Activated CD8-positive, alpha-beta T cell treated with anti-CD3 and anti-CD28 coated beads for 36 hours (primary cell): ENCODE measurements at regions of chr7 and their contacts with region 1.

Region 1: DNA sequence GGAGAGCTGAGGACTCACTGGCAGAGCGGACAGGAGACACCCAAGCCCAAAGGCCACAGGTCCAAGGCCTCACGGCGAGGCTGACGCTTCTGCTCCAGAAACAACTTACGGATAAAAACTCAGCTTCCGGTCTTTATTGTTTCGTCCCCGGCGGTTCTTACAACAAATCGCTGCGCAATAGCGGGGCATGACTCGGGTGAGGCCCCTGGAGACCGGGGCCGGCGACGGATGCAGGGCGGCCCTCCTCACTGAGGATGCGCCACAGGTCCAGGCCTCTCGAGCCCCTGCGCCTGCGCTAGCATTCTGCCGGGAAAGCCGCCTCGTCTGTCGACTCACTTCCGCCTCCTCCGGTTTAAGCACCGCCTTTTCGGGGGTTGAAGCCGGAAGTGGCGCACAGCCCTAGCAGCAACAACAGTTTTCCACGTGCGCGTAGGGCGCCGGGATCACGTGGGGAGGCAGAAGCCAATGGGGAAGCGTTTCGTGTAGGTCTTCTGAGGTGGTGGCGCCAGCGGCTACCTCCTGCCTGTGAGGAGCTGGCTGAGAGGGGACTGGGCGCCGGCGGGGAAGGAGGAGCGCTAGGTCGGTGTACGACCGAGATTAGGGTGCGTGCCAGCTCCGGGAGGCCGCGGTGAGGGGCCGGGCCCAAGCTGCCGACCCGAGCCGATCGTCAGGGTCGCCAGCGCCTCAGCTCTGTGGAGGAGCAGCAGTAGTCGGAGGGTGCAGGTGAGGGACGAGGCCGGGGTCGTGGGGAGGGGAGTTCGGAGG is at the starts of genes DNAJB9 and THAP5:
- DNase-seq: peak; percentile 99
- ATAC-seq: peak; percentile 92
- H3K4me3 Mint-ChIP-seq: peak within 1 kb of the TSS; percentile 99
- H3K27ac Mint-ChIP-seq: peak within 1 kb of the TSS; percentile 99
- H3K4me1 Mint-ChIP-seq: peaks cover 45% of the 10 kb centered on the region
- H3K27me3 Mint-ChIP-seq: no peaks in the 10 kb centered on the region
- CTCF ChIP-seq: no peak
- total RNA-seq, gene DNAJB9: 6.5 to 11.6 TPM
- total RNA-seq, gene THAP5: 26.5 to 28.8 TPM

Region 2: GRCh38 chr7:108079648-108080591 is 489.6 kb before region 1 on chr7:
- CTCF ChIA-PET with region 1: no interaction called
- POLR2A ChIA-PET with region 1: no interaction called
- intact Hi-C with region 1: no loop called
- DNase-seq: no peak
- ATAC-seq: no peak
- H3K4me3 Mint-ChIP-seq: no peak overlapping the region
- H3K27ac Mint-ChIP-seq: no peak overlapping the region
- H3K4me1 Mint-ChIP-seq: no peaks in the 10 kb centered on the region
- H3K27me3 Mint-ChIP-seq: peaks cover under 1% of the 10 kb centered on the region
- CTCF ChIP-seq: no peak

Region 3: DNA sequence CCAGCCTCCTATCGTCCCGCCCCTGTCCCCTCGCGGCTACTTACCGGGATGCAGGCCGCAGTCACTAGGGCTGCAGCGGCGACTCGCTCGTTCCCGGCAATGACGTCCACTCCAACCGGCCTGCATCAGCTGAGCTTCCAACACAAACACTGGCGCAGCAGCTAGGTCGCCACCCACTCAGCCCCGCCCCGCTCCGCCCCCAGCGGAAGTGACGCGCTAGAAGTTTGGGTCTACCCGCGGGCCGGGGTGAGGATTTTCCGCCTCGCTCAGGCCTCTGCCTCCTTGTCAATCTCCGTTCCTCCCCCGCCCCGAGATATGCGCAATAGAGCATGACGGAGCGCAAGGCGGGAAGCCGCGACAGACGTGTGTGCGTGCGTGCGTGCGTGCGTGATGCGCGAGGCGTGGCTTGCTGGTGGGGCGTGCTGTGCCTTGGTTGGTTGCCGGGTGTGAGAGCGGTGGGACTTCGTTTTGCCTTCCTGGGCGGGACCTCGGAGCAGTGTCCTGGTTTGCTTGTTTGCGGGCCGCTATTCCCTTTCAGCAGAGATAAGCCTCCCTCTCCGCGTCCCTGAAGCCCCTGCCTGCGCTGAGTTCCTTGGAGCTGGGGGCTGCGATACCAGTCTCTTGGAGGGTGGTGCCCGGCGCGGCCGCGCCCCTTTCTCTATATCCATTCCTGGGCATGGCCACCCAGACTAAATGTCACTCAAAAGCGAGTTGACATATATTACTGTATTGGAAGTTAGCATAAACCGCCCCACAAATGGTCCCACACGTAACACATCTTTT is 43.4 kb before region 1 on chr7 and contains the start of gene PNPLA8:
- CTCF ChIA-PET with region 1: interaction called, 4 read pairs
- POLR2A ChIA-PET with region 1: interaction called, 17 read pairs
- intact Hi-C with region 1: loop called (anchors 1 kb)
- DNase-seq: peak; percentile 100
- ATAC-seq: peak; percentile 93
- H3K4me3 Mint-ChIP-seq: peak within 1 kb of the TSS; percentile 85
- H3K27ac Mint-ChIP-seq: peak within 1 kb of the TSS; percentile 98
- H3K4me1 Mint-ChIP-seq: peaks cover 44% of the 10 kb centered on the region
- H3K27me3 Mint-ChIP-seq: no peaks in the 10 kb centered on the region
- CTCF ChIP-seq: no peak
- total RNA-seq, gene PNPLA8: 19.2 to 21.4 TPM

Region 4: GRCh38 chr7:109126404-109127050 is 557.0 kb after region 1 on chr7:
- CTCF ChIA-PET with region 1: no interaction called
- POLR2A ChIA-PET with region 1: no interaction called
- intact Hi-C with region 1: no loop called
- DNase-seq: no peak
- ATAC-seq: no peak
- H3K4me3 Mint-ChIP-seq: no peak overlapping the region
- H3K27ac Mint-ChIP-seq: no peak overlapping the region
- H3K4me1 Mint-ChIP-seq: no peaks in the 10 kb centered on the region
- H3K27me3 Mint-ChIP-seq: no peaks in the 10 kb centered on the region
- CTCF ChIP-seq: no peak